CD8-positive, alpha-beta T cell (primary cell): ENCODE measurements at regions of chr2 and their contacts with region 1.

Region 1: GRCh38 chr2:197515739-197516392 is at the start of gene MOB4:
- DNase-seq: peak; percentile 90 to 97 (median 93)
- ATAC-seq: peak; percentile 90
- H3K4me3 ChIP-seq: peak within 1 kb of the TSS; percentile 73 to 94
- H3K4me3 Mint-ChIP-seq: peak within 1 kb of the TSS; percentile 92
- H3K27ac ChIP-seq: peak within 1 kb of the TSS; percentile 88 to 99
- H3K27ac Mint-ChIP-seq: peak within 1 kb of the TSS; percentile 93
- H3K4me1 ChIP-seq: peaks cover 22% of the 10 kb centered on the region
- H3K4me1 Mint-ChIP-seq: peaks cover 44% of the 10 kb centered on the region
- H3K27me3 ChIP-seq: no peaks in the 10 kb centered on the region
- H3K27me3 Mint-ChIP-seq: no peaks in the 10 kb centered on the region
- CTCF ChIP-seq: no peak
- total RNA-seq, gene MOB4: 32.1 to 36.5 TPM

Region 2: DNA sequence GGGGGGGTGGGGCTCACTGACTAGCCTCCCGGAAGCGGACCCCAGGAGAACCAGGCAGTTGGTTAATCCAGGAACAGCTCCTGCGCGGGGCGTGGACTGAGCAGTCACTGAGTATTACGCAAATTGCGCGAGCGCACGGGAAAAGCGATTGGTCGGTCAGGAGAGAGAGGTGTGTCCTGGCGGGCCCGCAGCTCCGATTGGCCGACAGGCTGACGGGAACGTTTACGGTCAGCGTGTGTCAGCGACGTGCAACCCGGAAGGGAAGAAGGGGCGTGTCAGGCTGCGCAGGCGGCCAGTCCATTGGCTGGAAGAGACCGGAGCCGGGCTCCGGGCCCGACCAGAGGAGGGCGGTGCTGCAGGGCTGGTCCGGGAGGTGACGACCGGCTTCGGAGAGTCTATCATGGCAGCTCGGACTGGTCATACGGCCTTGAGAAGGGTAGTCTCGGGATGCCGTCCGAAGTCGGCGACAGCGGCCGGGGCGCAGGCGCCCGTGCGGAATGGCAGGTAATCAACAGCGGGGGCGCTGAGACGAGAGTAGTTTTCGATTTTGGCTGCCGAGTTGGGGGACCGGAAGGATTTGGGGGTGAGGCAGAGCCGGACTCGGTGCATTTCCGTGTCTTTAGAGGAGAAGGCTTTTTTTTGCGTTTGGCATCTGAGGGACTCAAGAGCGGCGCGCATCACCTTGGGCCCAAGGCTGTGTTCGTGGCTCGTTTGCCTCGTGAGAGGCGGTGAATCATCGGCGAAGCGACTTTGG is 62.5 kb before region 1 on chr2 and contains the start of gene COQ10B:
- CTCF ChIA-PET with region 1: no interaction called
- POLR2A ChIA-PET with region 1: interaction called, 19 read pairs
- intact Hi-C with region 1: loop called (anchors 1 to 5 kb)
- DNase-seq: peak; percentile 95 to 100 (median 97)
- ATAC-seq: peak; percentile 87
- H3K4me3 ChIP-seq: peak within 1 kb of the TSS; percentile 62 to 74
- H3K4me3 Mint-ChIP-seq: peak within 1 kb of the TSS; percentile 99
- H3K27ac ChIP-seq: peak within 1 kb of the TSS; percentile 93 to 95
- H3K27ac Mint-ChIP-seq: peak within 1 kb of the TSS; percentile 100
- H3K4me1 ChIP-seq: peaks cover 28% of the 10 kb centered on the region
- H3K4me1 Mint-ChIP-seq: peaks cover 48% of the 10 kb centered on the region
- H3K27me3 ChIP-seq: no peaks in the 10 kb centered on the region
- H3K27me3 Mint-ChIP-seq: no peaks in the 10 kb centered on the region
- CTCF ChIP-seq: no peak
- total RNA-seq, gene COQ10B: 66.9 to 67.6 TPM